Activated B cell treated with CpG ODN at 0.5 μM for 24 hours (primary cell): ENCODE measurements at regions of chrX and their contacts with region 1.

Region 1: GRCh38 chrX:154714925-154715324 is 36.0 kb downstream of the GAB3 start:
- DNase-seq: no peak
- ATAC-seq: peak; percentile 67
- H3K4me3 Mint-ChIP-seq: no peak overlapping the region
- H3K27ac Mint-ChIP-seq: no peak overlapping the region
- H3K4me1 Mint-ChIP-seq: peaks cover 52% of the 10 kb centered on the region
- H3K27me3 Mint-ChIP-seq: no peaks in the 10 kb centered on the region
- CTCF ChIP-seq: no peak

Region 2: DNA sequence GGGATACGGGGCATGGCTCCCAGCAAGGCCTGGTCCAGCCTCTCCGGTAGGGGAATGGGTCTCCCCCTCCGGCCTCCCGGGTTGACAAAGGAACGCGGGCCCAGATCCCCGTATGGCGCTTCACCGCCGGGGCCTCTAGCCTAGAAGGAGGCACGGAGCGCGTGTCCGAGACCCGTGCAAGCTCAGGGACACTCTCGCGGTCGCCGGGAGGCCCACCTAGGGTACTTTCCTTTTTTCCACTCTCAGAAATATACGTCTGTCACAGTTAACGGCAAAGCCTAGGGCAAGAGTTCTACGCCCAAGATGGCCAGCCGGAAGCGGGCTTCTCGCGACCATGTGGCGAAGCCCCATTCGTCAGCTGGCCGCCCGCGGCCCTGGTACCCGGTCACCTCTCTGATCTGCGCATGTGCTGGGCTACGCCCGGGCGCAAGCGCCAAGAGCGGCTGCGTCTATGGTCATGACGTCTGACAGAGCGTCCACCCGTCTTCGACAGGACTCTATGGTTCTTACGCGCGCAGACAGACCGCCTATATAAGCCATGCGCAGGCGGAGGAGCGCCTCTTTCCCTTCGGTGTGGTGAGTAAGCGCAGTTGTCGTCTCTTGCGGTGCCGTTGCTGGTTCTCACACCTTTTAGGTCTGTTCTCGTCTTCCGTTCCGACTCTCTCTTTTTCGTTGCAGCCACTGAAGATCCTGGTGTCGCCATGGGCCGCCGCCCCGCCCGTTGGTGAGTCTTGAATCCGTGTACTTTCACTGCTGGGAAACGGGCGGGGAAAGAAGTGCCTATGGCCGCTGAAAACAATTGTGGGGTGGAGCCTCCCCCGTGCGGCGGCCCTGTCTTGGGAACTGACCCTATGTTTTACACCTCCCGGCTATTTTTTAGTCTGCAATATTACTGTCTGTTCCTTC is 316.9 kb before region 1 on chrX and contains the start of gene RPL10:
- CTCF ChIA-PET with region 1: no interaction called
- POLR2A ChIA-PET with region 1: no interaction called
- intact Hi-C with region 1: no loop called
- DNase-seq: peak; percentile 76
- ATAC-seq: peak; percentile 75
- H3K4me3 Mint-ChIP-seq: peak within 1 kb of the TSS; percentile 97
- H3K27ac Mint-ChIP-seq: peak within 1 kb of the TSS; percentile 99
- H3K4me1 Mint-ChIP-seq: peaks cover 26% of the 10 kb centered on the region
- H3K27me3 Mint-ChIP-seq: no peaks in the 10 kb centered on the region
- CTCF ChIP-seq: no peak
- total RNA-seq, gene RPL10: 5,113 and 5,534 TPM in 2 replicates

Region 3: GRCh38 chrX:154734061-154734781 is 19.3 kb after region 1 on chrX:
- CTCF ChIA-PET with region 1: interaction called, 3 read pairs
- POLR2A ChIA-PET with region 1: interaction called, 6 read pairs
- intact Hi-C with region 1: loop called (anchors 1 kb)
- DNase-seq: no peak
- ATAC-seq: peak; percentile 67
- H3K4me3 Mint-ChIP-seq: peak overlapping the region; percentile 52
- H3K27ac Mint-ChIP-seq: peak overlapping the region; percentile 91
- H3K4me1 Mint-ChIP-seq: peaks cover 60% of the 10 kb centered on the region
- H3K27me3 Mint-ChIP-seq: no peaks in the 10 kb centered on the region
- CTCF ChIP-seq: no peak

Region 4: GRCh38 chrX:154748712-154749343 is 33.9 kb after region 1 on chrX:
- CTCF ChIA-PET with region 1: interaction called, 32 read pairs
- POLR2A ChIA-PET with region 1: interaction called, 5 read pairs
- intact Hi-C with region 1: loop called (anchors 1 kb)
- DNase-seq: no peak
- ATAC-seq: peak; percentile 51
- H3K4me3 Mint-ChIP-seq: no peak overlapping the region
- H3K27ac Mint-ChIP-seq: no peak overlapping the region
- H3K4me1 Mint-ChIP-seq: peaks cover 21% of the 10 kb centered on the region
- H3K27me3 Mint-ChIP-seq: no peaks in the 10 kb centered on the region
- CTCF ChIP-seq: peak; percentile 31

Region 5: GRCh38 chrX:154840856-154841255 is 125.9 kb after region 1 on chrX:
- CTCF ChIA-PET with region 1: no interaction called
- POLR2A ChIA-PET with region 1: no interaction called
- intact Hi-C with region 1: loop called (anchors 1 kb)
- DNase-seq: no peak
- ATAC-seq: peak; percentile 66
- H3K4me3 Mint-ChIP-seq: no peak overlapping the region
- H3K27ac Mint-ChIP-seq: no peak overlapping the region
- H3K4me1 Mint-ChIP-seq: no peaks in the 10 kb centered on the region
- H3K27me3 Mint-ChIP-seq: no peaks in the 10 kb centered on the region
- CTCF ChIP-seq: no peak